ENCODE measurements at regions of chr2 and their contacts with region 1.

Region 1: GRCh38 chr2:178450774-178451525 is at the starts of genes PJVK and PRKRA:
- DNase-seq: peak; percentile 97
- ATAC-seq: peak; percentile 92
- H3K4me3 ChIP-seq: peak within 1 kb of the TSS; percentile 72 to 97 (median 92)
- H3K4me3 Mint-ChIP-seq: peak within 1 kb of the TSS; percentile 94
- H3K27ac ChIP-seq: peak within 1 kb of the TSS; percentile 83 to 94
- H3K27ac Mint-ChIP-seq: peak within 1 kb of the TSS; percentile 92
- H3K4me1 ChIP-seq: peaks cover 7 to 16% of the 10 kb centered on the region in 2 donors
- H3K4me1 Mint-ChIP-seq: peaks cover 29% of the 10 kb centered on the region
- H3K27me3 ChIP-seq: no peaks in the 10 kb centered on the region
- H3K27me3 Mint-ChIP-seq: no peaks in the 10 kb centered on the region
- CTCF ChIP-seq: no peak
- total RNA-seq, gene PJVK: 4.0 and 7.9 TPM in 2 replicates
- total RNA-seq, gene PRKRA: 66.0 and 71.9 TPM in 2 replicates

Region 2: DNA sequence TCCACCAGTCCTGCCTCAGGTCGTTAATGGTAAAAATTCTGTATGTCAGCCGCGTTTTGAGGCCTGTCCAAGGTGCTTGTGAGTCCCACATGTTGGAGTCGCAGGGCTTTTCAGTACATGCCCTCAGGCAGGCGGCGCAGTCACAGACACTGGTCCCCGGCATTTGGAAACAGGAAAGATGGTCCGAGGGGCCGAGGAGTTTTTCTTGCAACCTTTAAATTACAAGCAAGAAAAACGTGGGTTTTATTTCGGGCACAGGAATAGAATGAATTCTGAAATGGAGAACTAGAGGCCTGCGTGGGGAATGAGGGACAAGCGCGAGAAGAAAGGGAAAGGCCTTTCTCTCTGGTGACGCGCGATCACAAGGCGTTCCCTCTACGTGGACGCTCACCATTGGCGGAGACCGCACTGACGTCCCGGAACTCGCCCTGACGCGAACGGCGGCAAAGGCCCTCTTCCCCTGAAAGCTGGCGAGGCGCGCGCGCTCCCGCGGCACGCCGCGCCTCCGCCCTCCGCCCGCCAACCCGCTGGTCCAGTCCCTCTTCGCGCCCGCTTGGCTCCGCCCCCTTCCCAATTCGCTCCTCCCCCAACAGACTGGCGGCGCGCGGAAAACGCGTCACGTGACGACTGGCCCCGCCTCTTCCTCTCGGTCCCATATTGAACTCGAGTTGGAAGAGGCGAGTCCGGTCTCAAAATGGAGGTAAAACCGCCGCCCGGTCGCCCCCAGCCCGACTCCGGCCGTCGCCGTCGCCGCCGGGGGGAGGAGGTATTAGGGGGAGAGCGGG is 1238.7 kb before region 1 on chr2 and contains the start of gene HNRNPA3:
- CTCF ChIA-PET with region 1: no interaction called
- POLR2A ChIA-PET with region 1: no interaction called
- intact Hi-C with region 1: loop called (anchors 2 kb)
- DNase-seq: peak; percentile 100
- ATAC-seq: peak; percentile 86
- H3K4me3 ChIP-seq: peak within 1 kb of the TSS; percentile 81 to 97 (median 94)
- H3K4me3 Mint-ChIP-seq: peak within 1 kb of the TSS; percentile 91
- H3K27ac ChIP-seq: peak within 1 kb of the TSS; percentile 99 to 100
- H3K27ac Mint-ChIP-seq: peak within 1 kb of the TSS; percentile 98
- H3K4me1 ChIP-seq: peaks cover 32 to 37% of the 10 kb centered on the region in 2 donors
- H3K4me1 Mint-ChIP-seq: peaks cover 47% of the 10 kb centered on the region
- H3K27me3 ChIP-seq: no peaks in the 10 kb centered on the region
- H3K27me3 Mint-ChIP-seq: no peaks in the 10 kb centered on the region
- CTCF ChIP-seq: no peak
- total RNA-seq, gene HNRNPA3: 197 and 200 TPM in 2 replicates

Region 3: GRCh38 chr2:178414266-178415247 is 36.4 kb before region 1 on chr2:
- CTCF ChIA-PET with region 1: interaction called, 34 read pairs
- POLR2A ChIA-PET with region 1: interaction called, 9 read pairs
- intact Hi-C with region 1: loop called (anchors 1 kb)
- DNase-seq: peak; percentile 85
- ATAC-seq: peak; percentile 73
- H3K4me3 ChIP-seq: peak overlapping the region; percentile 52 to 96 (median 71)
- H3K4me3 Mint-ChIP-seq: peak overlapping the region; percentile 88
- H3K27ac ChIP-seq: peak overlapping the region; percentile 57 to 78
- H3K27ac Mint-ChIP-seq: peak overlapping the region; percentile 93
- H3K4me1 ChIP-seq: peaks cover 10 to 15% of the 10 kb centered on the region in 2 donors
- H3K4me1 Mint-ChIP-seq: peaks cover 19% of the 10 kb centered on the region
- H3K27me3 ChIP-seq: no peaks in the 10 kb centered on the region
- H3K27me3 Mint-ChIP-seq: no peaks in the 10 kb centered on the region
- CTCF ChIP-seq: peak; percentile 95

Region 4: DNA sequence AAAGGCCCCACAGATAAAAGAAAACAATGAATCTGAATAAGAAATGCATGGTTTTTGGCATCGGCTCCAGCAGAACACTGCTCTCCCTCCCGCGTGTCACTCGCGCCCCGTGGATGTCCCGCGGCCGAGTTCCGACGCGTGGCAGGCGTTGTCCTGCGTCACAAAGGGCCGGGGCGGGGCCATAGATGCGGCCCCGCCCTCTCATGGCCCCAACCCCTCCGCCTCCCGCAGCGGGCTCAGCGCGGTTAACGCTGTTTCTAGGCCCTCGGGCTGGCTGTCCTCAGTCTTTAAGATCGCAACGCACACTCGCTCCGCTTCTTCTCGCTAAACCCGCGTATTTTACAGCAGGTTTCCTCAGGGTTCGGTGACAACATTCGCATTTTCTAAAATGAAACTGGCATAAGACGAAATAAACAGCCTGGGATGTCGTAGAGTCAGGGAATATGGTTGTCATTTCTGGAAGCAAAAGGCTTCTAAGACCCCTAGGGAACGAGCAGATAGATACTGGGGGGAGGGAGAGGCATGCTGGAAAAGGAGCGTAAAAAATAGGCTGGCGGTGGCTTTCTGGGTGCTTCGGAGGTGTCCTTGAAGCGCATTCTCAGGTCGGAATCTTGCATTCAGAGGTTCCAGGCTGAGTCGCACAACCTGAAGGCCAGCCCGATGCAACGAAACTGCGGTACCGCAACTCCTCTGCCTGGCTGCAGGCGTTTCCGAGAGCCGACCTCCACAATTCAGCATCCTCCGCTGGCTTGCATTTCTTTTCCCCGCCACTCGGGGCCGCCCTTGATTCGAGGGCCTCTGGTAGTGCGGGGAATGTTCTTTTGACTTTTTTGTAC is 27.7 kb after region 1 on chr2 and contains the start of gene FKBP7:
- CTCF ChIA-PET with region 1: no interaction called
- POLR2A ChIA-PET with region 1: interaction called, 5 read pairs
- intact Hi-C with region 1: loop called (anchors 1 kb)
- DNase-seq: peak; percentile 93
- ATAC-seq: peak; percentile 74
- H3K4me3 ChIP-seq: peak within 1 kb of the TSS; percentile 76 to 100 (median 98)
- H3K4me3 Mint-ChIP-seq: peak within 1 kb of the TSS; percentile 98
- H3K27ac ChIP-seq: peak within 1 kb of the TSS; percentile 86 to 90
- H3K27ac Mint-ChIP-seq: peak within 1 kb of the TSS; percentile 97
- H3K4me1 ChIP-seq: peaks cover 32 to 34% of the 10 kb centered on the region in 2 donors
- H3K4me1 Mint-ChIP-seq: peaks cover 41% of the 10 kb centered on the region
- H3K27me3 ChIP-seq: no peaks in the 10 kb centered on the region
- H3K27me3 Mint-ChIP-seq: no peaks in the 10 kb centered on the region
- CTCF ChIP-seq: peak; percentile 78
- total RNA-seq, gene FKBP7: 0.39 and 1.7 TPM in 2 replicates

Region 5: GRCh38 chr2:178522950-178523595 is 72.1 kb after region 1 on chr2:
- CTCF ChIA-PET with region 1: no interaction called
- POLR2A ChIA-PET with region 1: interaction called, 4 read pairs
- intact Hi-C with region 1: loop called (anchors 1 kb)
- DNase-seq: peak; percentile 88
- ATAC-seq: peak; percentile 98
- H3K4me3 ChIP-seq: peak overlapping the region; percentile 50 to 93 (median 90)
- H3K4me3 Mint-ChIP-seq: peak overlapping the region; percentile 95
- H3K27ac ChIP-seq: peak overlapping the region; percentile 4 to 78
- H3K27ac Mint-ChIP-seq: peak overlapping the region; percentile 88
- H3K4me1 ChIP-seq: peaks cover 11 to 12% of the 10 kb centered on the region in 2 donors
- H3K4me1 Mint-ChIP-seq: peaks cover 31% of the 10 kb centered on the region
- H3K27me3 ChIP-seq: no peaks in the 10 kb centered on the region
- H3K27me3 Mint-ChIP-seq: no peaks in the 10 kb centered on the region
- CTCF ChIP-seq: peak; percentile 77

Region 6: GRCh38 chr2:178530625-178531142 is 79.7 kb after region 1 on chr2:
- CTCF ChIA-PET with region 1: no interaction called
- POLR2A ChIA-PET with region 1: interaction called, 4 read pairs
- intact Hi-C with region 1: loop called (anchors 2 kb)
- DNase-seq: peak; percentile 74
- ATAC-seq: peak; percentile 90
- H3K4me3 ChIP-seq: peak overlapping the region in 4 of 5 experiments; percentile 3 to 36 (median 11)
- H3K4me3 Mint-ChIP-seq: peak overlapping the region; percentile 85
- H3K27ac ChIP-seq: peak overlapping the region; percentile 57 to 73
- H3K27ac Mint-ChIP-seq: peak overlapping the region; percentile 87
- H3K4me1 ChIP-seq: peaks cover 10 to 26% of the 10 kb centered on the region in 2 donors
- H3K4me1 Mint-ChIP-seq: peaks cover 32% of the 10 kb centered on the region
- H3K27me3 ChIP-seq: no peaks in the 10 kb centered on the region
- H3K27me3 Mint-ChIP-seq: no peaks in the 10 kb centered on the region
- CTCF ChIP-seq: no peak

Region 7: DNA sequence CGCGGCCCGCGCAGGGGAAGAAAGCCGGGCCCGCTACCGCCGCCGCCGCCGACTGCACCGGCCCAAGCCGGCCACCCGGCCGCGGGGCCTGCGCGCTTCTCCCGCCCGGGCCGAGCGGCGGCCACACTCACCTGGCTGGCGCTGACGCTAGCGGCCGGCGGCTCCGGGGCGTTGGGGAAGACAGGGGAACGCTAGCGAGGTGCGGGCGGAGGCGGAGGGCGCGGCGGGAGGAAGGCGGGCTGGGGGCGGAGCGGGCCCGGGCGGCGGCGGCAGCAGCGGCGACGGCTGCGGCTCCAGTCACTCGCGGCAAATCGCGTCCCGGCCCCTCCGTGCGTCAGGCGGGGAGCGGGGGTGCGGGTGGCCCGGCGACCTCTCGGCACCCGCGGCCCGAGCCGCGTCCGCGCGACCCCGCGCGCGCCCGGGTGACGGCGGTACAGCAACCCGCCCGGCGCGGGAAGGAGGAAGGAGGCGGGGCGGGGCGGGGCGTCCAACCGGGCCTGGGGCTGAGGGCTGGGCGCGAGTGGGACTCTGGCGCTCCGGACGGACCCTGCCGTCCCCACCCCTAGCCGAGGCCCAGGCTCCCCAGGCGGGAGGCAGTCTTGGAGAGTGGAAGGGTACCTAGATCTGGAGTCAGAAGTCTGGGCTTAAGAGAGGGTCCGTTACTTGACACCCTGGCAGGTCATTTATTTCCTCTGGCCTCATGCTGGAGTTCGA is 813.6 kb after region 1 on chr2 and contains the start of gene SESTD1:
- CTCF ChIA-PET with region 1: no interaction called
- POLR2A ChIA-PET with region 1: no interaction called
- intact Hi-C with region 1: loop called (anchors 10 kb)
- DNase-seq: peak; percentile 83
- ATAC-seq: peak; percentile 79
- H3K4me3 ChIP-seq: peak within 1 kb of the TSS; percentile 62 to 96 (median 80)
- H3K4me3 Mint-ChIP-seq: peak within 1 kb of the TSS; percentile 92
- H3K27ac ChIP-seq: peak within 1 kb of the TSS; percentile 54 to 87
- H3K27ac Mint-ChIP-seq: peak within 1 kb of the TSS; percentile 91
- H3K4me1 ChIP-seq: peaks cover 24 to 45% of the 10 kb centered on the region in 2 donors
- H3K4me1 Mint-ChIP-seq: peaks cover 51% of the 10 kb centered on the region
- H3K27me3 ChIP-seq: no peaks in the 10 kb centered on the region
- H3K27me3 Mint-ChIP-seq: no peaks in the 10 kb centered on the region
- CTCF ChIP-seq: no peak
- total RNA-seq, gene SESTD1: 66.1 and 71.9 TPM in 2 replicates

Measured in B cell (primary cell).